MCF 10A (cell line): ENCODE measurements at regions of chr2 and their contacts with region 1.

Region 1: DNA sequence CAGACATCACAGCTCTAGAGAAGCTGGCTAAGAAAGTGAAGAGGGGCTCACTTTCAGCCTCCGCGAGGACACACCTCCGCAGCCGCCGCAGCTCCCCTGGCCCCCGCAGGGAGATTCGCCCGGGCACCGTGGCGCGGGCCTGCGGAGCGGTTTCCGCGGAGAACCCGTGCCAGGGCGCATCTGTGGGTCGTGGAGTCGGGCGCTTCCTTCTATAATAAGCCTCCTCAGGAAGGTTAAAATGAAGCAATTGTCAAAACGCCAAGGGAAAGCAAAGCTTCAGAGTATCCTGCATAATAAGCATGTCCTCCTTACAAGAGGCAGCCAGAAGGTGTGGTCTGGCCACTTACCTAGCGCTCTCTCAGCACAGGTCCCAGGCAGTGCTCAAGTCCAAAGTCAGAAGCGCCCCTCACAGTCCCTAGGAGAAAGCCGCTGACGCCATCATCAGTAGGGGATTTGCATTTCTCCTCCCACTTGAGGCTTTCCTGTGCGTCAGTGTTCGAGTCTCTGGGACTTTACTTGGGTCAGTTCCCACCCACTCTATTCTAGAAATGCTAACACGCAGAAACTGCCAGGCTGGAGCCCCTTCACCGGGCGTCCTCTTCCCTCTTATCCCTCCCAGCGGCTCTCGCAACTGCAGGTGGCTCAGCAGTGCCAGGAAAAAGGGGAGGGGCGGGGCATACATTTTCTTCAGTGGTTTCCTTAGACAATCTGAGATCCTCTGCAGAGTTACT is at the start of gene STAT4:
- DNase-seq: peak; percentile 57
- H3K4me3 Mint-ChIP-seq: peak within 1 kb of the TSS; percentile 69
- H3K27ac Mint-ChIP-seq: no peak within 1 kb of the TSS
- H3K4me1 Mint-ChIP-seq: no peaks in the 10 kb centered on the region
- H3K27me3 Mint-ChIP-seq: peaks cover 10% of the 10 kb centered on the region
- CTCF ChIP-seq: no peak
- total RNA-seq, gene STAT4: 0.83 and 1.4 TPM in 2 replicates

Region 2: DNA sequence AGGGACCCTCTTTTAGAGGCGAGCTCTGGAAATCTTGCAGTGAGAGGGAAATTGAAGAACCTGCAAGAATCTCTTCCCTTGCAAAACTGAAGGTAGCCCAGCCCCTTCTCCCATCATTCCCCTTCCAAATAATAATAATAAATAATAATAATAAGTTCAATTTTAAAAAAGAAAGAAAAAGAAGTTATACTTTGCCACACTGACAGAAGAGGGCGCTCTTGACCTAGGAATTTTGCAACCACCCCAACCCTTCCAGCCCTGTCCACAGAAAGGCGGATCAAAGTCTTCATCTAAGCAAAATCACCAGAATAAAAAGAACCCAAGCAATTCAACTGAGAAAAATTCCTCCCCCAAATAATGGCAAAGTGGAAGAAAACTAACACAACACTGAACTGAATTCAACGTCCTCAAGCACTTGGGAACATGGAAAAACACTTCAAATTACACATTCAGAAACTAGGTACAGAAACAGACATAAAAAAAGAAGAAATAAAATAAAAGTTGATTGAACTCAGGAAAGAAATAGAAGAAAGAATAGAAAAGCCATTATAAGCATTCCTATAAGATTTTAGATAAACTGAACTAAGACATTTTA is 369.1 kb before region 1 on chr2:
- CTCF ChIA-PET with region 1: interaction called, 26 read pairs
- POLR2A ChIA-PET with region 1: no interaction called
- intact Hi-C with region 1: loop called (anchors 1 kb)
- DNase-seq: peak; percentile 59
- H3K4me3 Mint-ChIP-seq: no peak overlapping the region
- H3K27ac Mint-ChIP-seq: no peak overlapping the region
- H3K4me1 Mint-ChIP-seq: no peaks in the 10 kb centered on the region
- H3K27me3 Mint-ChIP-seq: no peaks in the 10 kb centered on the region
- CTCF ChIP-seq: peak; percentile 72

Region 3: DNA sequence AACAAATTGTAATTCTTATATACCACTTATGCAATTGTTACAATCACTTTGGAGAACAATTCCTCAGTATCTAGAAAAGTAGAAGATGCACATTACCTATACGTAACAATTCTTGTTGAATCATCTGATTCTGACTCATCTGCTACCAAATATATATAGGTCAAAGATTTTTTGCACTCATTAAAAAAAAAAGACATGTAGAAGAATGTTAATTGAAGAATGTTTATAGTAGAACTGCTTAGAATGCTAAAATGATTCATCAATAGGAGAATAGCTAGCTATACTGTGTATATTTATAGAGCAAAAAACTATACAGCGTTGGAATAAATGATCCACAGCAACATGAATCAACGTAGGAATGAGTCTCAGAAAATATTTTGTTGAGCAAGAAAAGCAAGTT is 107.3 kb before region 1 on chr2:
- CTCF ChIA-PET with region 1: interaction called, 604 read pairs
- POLR2A ChIA-PET with region 1: no interaction called
- intact Hi-C with region 1: no loop called
- DNase-seq: peak; percentile 47
- H3K4me3 Mint-ChIP-seq: no peak overlapping the region
- H3K27ac Mint-ChIP-seq: no peak overlapping the region
- H3K4me1 Mint-ChIP-seq: peaks cover 13% of the 10 kb centered on the region
- H3K27me3 Mint-ChIP-seq: no peaks in the 10 kb centered on the region
- CTCF ChIP-seq: no peak

Region 4: DNA sequence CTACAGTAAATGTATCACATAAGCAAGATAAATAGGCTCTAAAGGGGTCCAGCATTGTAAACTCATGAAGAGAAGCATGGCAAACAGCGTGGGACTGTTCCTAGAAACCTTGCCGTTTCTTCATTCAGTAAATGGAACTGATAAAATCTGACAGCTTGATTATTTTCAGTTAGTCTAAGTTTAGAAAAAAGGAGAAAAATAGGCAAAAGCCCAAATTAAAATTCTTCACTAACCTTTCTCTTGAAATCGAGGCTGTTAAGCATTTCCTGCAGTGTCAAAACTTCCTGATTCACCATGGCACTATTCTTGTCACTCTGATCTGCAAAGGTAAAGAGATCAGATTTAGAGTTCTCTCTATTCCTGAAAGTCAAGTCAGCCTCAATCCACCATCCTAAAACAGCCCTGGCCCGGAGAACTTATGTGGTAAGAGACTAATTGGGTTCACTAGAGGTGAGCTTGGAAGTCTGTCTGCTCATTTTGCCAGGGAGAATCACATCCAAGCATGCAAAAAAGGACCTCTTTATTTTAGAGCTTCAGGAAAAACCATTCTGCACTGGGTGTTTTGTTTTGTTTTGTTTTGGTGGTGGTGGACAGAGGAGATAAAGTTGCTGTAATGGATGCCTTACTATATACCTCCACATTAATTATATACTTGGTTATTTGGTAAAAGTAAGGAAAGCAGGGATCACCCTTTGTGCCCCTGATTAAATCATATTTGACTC is 84.4 kb before region 1 on chr2:
- CTCF ChIA-PET with region 1: interaction called, 35 read pairs
- POLR2A ChIA-PET with region 1: no interaction called
- intact Hi-C with region 1: no loop called
- DNase-seq: no peak
- H3K4me3 Mint-ChIP-seq: no peak overlapping the region
- H3K27ac Mint-ChIP-seq: no peak overlapping the region
- H3K4me1 Mint-ChIP-seq: peaks cover 4% of the 10 kb centered on the region
- H3K27me3 Mint-ChIP-seq: no peaks in the 10 kb centered on the region
- CTCF ChIP-seq: no peak

Region 5: DNA sequence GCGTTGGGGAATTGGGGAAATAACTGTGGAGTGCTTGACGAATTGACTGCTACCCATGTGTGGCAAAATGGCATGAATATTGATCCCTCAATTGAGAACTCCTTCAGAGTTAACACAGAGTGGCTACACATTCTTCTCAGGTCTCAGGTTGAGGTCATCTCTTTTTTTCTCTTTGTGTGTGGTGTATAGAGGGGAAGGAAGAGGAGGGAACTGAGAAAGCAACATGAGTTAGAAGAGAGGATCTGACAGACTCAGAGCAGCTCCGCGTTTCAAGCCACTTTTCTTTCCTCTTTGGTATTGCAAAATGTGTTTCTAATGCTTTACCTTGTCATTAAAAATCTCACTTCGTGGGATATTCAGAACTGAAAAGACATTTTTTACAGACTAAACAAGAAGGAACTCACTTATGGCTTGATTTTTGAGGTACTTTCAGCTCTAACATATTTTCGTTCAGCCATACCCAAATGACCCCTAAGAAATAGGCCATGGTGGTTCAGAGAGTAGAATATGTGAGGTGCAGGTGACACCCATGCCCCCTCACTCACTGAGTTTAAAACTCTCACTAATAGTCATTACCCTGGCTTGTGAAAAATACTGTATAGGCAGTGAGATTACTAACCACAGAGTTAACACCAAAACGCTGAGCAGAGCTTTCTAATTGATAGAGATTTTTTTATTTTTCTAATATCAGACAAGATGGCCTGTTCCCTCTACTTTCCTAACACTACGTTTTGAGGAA is 22.4 kb before region 1 on chr2:
- CTCF ChIA-PET with region 1: interaction called, 11 read pairs
- POLR2A ChIA-PET with region 1: no interaction called
- intact Hi-C with region 1: no loop called
- DNase-seq: no peak
- H3K4me3 Mint-ChIP-seq: no peak overlapping the region
- H3K27ac Mint-ChIP-seq: no peak overlapping the region
- H3K4me1 Mint-ChIP-seq: no peaks in the 10 kb centered on the region
- H3K27me3 Mint-ChIP-seq: no peaks in the 10 kb centered on the region
- CTCF ChIP-seq: no peak

Region 6: DNA sequence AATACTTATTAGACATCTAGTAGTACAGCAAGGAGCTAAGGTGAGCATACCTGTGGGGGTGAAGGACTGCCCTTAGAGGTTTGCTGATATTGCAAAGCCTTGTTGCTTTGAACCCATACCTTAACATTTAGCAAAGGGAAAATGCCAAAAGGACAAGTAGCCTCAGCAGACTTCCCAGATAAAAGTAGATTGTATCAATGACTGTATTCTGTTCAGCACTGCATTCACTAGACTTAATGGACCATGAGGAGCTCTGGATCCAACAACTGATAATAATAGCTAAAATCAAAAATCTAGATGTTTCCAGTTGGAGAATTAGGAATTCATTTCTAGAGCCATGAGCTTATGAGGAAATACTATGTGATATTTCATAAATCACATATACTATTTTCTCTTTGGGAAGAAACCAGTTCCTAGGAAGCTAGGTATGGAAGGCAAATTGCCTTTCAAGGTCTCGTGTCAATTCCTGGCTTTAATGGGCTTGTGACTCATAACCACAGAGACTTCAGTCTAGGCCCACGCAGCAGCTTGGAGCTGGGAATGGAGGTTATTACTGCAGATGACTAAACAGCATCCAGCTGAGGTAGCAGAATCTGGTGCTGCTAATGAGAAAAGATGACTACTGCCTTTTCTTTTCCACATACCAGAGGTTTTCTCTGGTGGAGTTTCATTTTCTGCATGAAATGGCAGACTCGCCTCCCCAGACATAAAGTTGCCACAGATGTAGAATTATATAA is 336.0 kb after region 1 on chr2:
- CTCF ChIA-PET with region 1: interaction called, 34 read pairs
- POLR2A ChIA-PET with region 1: no interaction called
- intact Hi-C with region 1: no loop called
- DNase-seq: peak; percentile 95
- H3K4me3 Mint-ChIP-seq: no peak overlapping the region
- H3K27ac Mint-ChIP-seq: peak overlapping the region; percentile 3
- H3K4me1 Mint-ChIP-seq: peaks cover 11% of the 10 kb centered on the region
- H3K27me3 Mint-ChIP-seq: no peaks in the 10 kb centered on the region
- CTCF ChIP-seq: no peak

Region 7: GRCh38 chr2:191521608-191522208 is 370.9 kb after region 1 on chr2:
- CTCF ChIA-PET with region 1: interaction called, 17 read pairs
- POLR2A ChIA-PET with region 1: no interaction called
- intact Hi-C with region 1: no loop called
- DNase-seq: peak; percentile 57
- H3K4me3 Mint-ChIP-seq: no peak overlapping the region
- H3K27ac Mint-ChIP-seq: no peak overlapping the region
- H3K4me1 Mint-ChIP-seq: no peaks in the 10 kb centered on the region
- H3K27me3 Mint-ChIP-seq: no peaks in the 10 kb centered on the region
- CTCF ChIP-seq: peak; percentile 51